Ovary (tissue), 10 donors: ENCODE measurements at regions of chr9 and their contacts with region 1.

Region 1: DNA sequence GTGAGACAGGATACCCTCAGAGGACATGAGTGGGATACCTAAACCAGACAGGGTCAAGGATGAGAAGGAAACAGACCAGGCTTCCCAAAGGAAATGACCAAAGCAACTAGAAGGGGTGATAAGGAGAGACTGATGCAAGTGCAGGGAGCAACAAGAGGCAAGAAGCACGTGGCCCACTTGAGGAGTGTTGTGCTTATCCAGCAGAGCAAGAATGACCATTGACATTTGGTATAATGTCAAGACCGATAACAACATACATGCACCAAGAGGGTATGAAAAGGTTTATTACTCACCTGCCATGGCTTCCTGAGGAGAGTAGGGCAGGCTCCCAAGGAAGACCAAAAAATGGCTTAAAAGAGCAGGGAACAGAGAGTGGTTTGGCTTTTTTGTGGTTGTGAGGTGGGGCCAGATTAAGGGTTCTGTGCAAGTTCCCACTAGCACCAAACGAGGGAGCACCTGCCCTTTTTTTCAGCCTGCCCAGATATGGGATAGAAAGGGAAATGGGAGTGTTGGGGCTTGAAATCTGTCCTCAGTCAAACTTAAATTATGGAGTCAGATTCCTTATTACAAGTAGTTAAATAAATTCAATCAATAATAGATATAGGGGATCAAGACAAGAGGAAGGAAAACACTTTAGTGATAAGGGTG is 513.6 kb downstream of the RASEF start:
- DNase-seq: no peak
- H3K4me3 ChIP-seq: no peak overlapping the region
- H3K27ac ChIP-seq: no peak overlapping the region
- H3K4me1 ChIP-seq: no peaks in the 10 kb centered on the region
- H3K27me3 ChIP-seq: no peaks in the 10 kb centered on the region
- CTCF ChIP-seq: no peak
- EP300 ChIP-seq: no peak
- POLR2A ChIP-seq: no peak

Region 2: GRCh38 chr9:82606492-82607382 is 57.4 kb after region 1 on chr9:
- intact Hi-C with region 1: loop called in 1 of 4 experiments (anchors 10 kb)
- DNase-seq: peak in 3 of 5 donors; percentile 14 to 26 (median 22)
- H3K4me3 ChIP-seq: no peak overlapping the region
- H3K27ac ChIP-seq: no peak overlapping the region
- H3K4me1 ChIP-seq: peaks cover 4% of the 10 kb centered on the region
- H3K27me3 ChIP-seq: no peaks in the 10 kb centered on the region
- CTCF ChIP-seq: peak in 1 of 3 donors; percentile 39
- EP300 ChIP-seq: no peak
- POLR2A ChIP-seq: no peak

Region 3: DNA sequence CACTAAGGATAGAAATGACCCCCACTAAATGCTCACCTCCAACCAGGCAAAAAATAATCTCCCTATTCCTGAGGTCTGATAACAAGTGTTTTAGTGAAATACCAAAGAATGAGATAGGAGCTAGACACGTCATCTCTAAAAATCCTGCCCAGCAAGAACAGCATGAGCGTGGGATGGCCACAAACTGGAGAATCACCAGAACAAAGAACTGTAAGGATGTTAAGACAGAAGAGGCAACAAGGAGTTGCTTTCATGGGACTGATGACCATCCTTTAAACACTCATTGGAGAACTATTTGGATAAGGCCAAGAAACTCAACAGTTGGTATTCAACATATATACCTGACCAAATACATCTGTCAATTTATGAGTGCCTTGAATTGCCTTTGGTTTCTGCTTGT is 399.9 kb after region 1 on chr9:
- intact Hi-C with region 1: no loop called
- DNase-seq: no peak
- H3K4me3 ChIP-seq: no peak overlapping the region
- H3K27ac ChIP-seq: no peak overlapping the region
- H3K4me1 ChIP-seq: no peaks in the 10 kb centered on the region
- H3K27me3 ChIP-seq: no peaks in the 10 kb centered on the region
- CTCF ChIP-seq: no peak
- EP300 ChIP-seq: no peak
- POLR2A ChIP-seq: no peak